Right ventricle myocardium inferior (tissue), 1 donor: ENCODE measurements at regions of chr15 and their contacts with region 1.

Region 1: DNA sequence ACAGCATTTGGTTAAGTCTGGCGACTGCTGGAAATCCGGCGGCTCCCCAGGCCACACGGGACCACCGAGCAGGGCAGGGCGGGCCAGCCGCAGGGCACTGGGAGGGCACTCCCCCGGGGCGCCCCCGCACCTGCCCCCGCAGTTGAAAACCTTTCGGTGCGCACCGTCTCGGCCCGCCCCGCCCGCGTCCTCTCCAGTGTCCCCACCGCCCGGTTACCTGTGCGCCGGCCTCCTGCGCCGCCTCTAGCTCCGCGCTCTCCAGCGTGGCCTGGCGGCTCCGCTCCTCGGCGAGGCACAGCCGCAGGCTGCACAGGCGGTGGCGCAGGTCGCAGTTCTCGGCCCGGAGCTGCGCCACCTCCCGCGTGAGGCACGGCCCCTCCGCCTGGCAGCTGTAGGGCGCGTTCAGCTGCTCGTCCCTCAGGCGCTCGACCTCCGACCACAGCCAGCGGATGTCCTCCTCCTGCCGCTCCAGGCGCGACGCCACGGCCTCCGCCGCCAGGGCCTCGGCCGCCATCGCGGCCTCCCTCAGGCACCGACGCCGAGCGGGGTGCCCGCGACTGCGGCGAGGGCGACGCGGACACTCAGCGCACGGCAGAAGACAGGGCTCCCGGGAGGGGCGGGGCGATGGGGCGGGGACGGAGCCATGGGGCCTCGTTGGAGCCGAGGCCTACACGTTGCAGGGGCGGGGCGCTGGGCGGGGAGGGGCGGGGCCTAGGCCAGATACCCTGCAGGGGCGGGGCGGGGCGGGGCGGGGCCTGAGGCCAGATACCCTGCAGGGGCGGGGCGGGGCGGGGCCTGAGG is at the start of gene TARS3:
- DNase-seq: peak; percentile 97
- ATAC-seq: peak; percentile 99
- total RNA-seq, gene TARS3: 31.9 TPM

Region 2: DNA sequence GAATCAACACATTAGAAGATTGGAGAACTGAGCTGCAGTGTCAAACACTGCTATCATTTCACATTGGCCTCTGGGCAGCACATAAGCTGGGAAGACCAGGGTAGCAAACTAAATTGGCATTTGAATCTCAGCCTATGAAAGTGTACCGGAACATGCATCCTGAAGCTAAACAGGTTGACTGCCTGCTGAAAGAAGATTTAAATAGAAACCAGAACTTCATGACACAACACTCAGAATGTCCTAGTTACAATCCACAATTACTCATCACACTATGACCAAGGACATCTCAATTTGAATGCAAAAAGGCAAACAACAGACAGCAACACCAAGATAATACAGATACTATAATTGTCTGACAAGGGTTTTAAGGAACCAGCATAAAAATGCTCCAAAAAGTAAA is 98.1 kb before region 1 on chr15:
- intact Hi-C with region 1: no loop called
- DNase-seq: no peak
- ATAC-seq: peak; percentile 91

Region 3: DNA sequence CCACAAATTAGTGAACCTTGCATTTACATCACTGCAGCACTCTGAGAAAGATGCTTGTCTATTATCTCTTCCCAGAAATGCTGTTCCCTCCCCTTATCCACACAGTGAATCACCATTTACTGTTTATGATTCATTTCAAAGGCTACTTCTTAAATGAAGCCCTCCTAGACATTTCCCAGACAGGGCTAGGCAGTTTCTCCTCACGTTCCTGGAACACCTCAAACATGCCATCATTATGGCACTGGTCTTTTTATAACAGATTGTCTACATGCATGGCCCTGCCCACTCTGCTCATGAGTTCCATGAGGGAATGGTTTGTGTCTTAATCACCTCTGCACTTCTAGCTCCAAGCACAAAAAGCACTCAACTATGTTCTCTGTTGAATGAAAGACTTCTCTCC is 39.7 kb before region 1 on chr15:
- intact Hi-C with region 1: loop called (anchors 1 kb)
- DNase-seq: no peak
- ATAC-seq: peak; percentile 68